ENCODE measurements at regions of chr3 and their contacts with region 1.

Region 1: DNA sequence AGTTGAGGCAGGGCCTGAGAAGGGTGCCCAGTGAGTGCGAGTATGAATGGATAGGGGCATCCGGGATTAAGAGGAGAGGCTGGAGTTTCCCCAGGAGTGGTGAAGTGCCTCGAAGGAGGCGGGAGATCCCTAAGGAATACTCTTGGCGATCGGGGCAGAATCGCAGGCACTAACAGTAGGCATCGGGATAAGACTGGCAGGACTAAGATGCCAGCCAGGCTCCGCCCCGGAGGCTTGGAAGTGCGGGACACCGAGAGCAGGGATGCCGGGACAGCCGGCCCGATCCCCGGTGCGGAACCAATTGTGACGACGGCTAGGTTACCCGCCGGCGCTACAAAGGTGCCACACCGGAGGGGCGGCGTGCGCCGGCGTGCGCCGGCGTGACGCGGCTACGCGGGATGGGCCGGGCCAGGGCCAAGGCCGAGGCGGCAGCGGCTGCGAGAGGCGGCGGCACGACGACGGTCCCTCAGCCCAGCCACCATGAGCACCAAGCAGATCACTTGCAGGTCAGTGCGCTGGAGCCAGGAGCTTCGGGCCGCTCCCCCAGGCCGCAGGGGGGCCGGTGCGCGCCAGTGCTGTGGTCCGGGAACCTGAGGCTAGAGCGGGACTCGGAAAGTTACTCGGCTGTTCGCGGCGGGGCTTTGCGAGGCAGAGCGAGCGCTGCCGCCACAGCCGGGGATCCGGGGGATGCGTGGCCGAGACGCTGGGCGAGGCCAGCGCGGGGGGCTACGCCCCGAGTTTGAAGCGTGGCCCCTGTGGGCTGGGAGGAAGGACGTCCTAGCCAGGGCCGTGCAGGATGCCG is at the start of gene MKRN2:
- DNase-seq: peak; percentile 89
- H3K4me3 ChIP-seq: peak within 1 kb of the TSS; percentile 86 to 98 (median 89)
- H3K27ac ChIP-seq: peak within 1 kb of the TSS; percentile 56
- H3K4me1 ChIP-seq: peaks cover 21% of the 10 kb centered on the region
- H3K27me3 ChIP-seq: no peaks in the 10 kb centered on the region
- CTCF ChIP-seq: no peak
- POLR2A ChIP-seq: peak; percentile 98
- total RNA-seq, gene MKRN2: 26.4 and 27.3 TPM in 2 replicates

Region 2: DNA sequence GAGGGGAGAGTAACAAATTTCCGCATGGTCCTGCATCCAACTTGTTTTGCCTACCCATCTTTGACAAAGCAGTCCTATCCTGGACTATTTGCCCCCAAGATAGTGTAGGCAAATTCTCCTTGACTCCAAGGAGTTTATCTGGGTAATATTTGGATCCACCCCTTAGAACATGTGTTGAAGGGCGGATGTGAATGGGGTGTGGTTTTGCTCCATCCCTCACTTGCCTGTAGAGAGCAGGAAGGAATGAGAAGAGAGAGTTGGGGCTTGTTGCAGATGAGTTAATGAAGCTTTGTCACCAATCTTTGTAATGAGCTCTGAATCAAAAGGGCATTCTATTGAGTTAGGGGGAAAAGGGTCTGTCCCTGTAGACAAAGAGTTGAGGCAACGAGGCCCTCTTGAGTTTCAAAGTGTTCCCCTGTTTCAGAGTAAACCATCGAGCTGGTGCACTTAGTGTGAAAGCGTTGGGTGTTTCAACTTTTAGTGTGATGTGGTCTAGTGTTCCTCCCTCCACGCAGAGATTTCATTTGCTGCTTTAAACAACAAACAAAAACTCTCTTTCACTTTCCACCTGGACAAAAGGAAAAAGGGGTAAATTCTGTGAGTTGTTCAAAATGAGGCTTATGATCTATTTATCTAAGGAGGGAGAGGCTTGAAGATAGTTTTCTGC is 310.2 kb before region 1 on chr3:
- CTCF ChIA-PET with region 1: no interaction called
- POLR2A ChIA-PET with region 1: no interaction called
- dilution Hi-C with region 1: no loop called
- intact Hi-C with region 1: no loop called
- DNase-seq: no peak
- H3K4me3 ChIP-seq: no peak overlapping the region
- H3K27ac ChIP-seq: no peak overlapping the region
- H3K4me1 ChIP-seq: no peaks in the 10 kb centered on the region
- H3K27me3 ChIP-seq: peaks cover 7 to 15% of the 10 kb centered on the region in 2 experiments
- CTCF ChIP-seq: no peak
- POLR2A ChIP-seq: no peak

Region 3: GRCh38 chr3:12508291-12508700 is 48.6 kb before region 1 on chr3:
- CTCF ChIA-PET with region 1: no interaction called
- POLR2A ChIA-PET with region 1: no interaction called
- dilution Hi-C with region 1: no loop called
- intact Hi-C with region 1: loop called (anchors 1 kb)
- DNase-seq: peak; percentile 76
- H3K4me3 ChIP-seq: no peak overlapping the region
- H3K27ac ChIP-seq: peak overlapping the region; percentile 49
- H3K4me1 ChIP-seq: peaks cover 18% of the 10 kb centered on the region
- H3K27me3 ChIP-seq: no peaks in the 10 kb centered on the region
- CTCF ChIP-seq: no peak
- POLR2A ChIP-seq: no peak

Region 4: DNA sequence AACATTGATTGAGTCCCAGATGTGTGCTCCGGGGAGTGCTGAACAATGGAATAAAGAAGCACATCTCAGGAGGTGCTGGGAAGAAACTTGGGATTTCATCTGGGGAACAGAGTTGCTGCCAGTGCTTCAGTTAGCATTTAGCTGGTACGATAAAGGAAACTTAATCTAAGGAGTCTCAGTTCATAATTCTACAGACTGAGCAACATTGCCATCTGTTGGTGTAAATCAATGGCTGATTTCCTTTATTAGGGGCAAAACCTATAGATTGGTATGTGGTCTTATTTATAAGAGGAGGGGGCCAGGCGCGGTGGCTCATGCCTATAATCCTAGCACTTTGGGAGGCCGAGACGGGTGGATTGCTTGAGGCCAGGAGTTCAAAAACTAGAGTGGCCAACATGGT is 20.4 kb before region 1 on chr3:
- CTCF ChIA-PET with region 1: no interaction called
- POLR2A ChIA-PET with region 1: no interaction called
- dilution Hi-C with region 1: no loop called
- intact Hi-C with region 1: no loop called
- DNase-seq: no peak
- H3K4me3 ChIP-seq: no peak overlapping the region
- H3K27ac ChIP-seq: no peak overlapping the region
- H3K4me1 ChIP-seq: no peaks in the 10 kb centered on the region
- H3K27me3 ChIP-seq: no peaks in the 10 kb centered on the region
- CTCF ChIP-seq: no peak
- POLR2A ChIP-seq: no peak

Region 5: GRCh38 chr3:12566976-12567375 is 10.1 kb after region 1 on chr3:
- CTCF ChIA-PET with region 1: interaction called, 7 read pairs
- POLR2A ChIA-PET with region 1: no interaction called
- dilution Hi-C with region 1: no loop called
- intact Hi-C with region 1: loop called (anchors 1 kb)
- DNase-seq: peak; percentile 20
- H3K4me3 ChIP-seq: no peak overlapping the region
- H3K27ac ChIP-seq: no peak overlapping the region
- H3K4me1 ChIP-seq: peaks cover 4% of the 10 kb centered on the region
- H3K27me3 ChIP-seq: no peaks in the 10 kb centered on the region
- CTCF ChIP-seq: no peak
- POLR2A ChIP-seq: no peak

Region 6: GRCh38 chr3:12841149-12841970 is 284.5 kb after region 1 on chr3 and contains the start of gene RPL32:
- CTCF ChIA-PET with region 1: no interaction called
- POLR2A ChIA-PET with region 1: no interaction called
- dilution Hi-C with region 1: no loop called
- intact Hi-C with region 1: loop called (anchors 5 kb)
- DNase-seq: peak; percentile 97
- H3K4me3 ChIP-seq: peak within 1 kb of the TSS; percentile 88 to 98 (median 91)
- H3K27ac ChIP-seq: peak within 1 kb of the TSS; percentile 95
- H3K4me1 ChIP-seq: peaks cover 26% of the 10 kb centered on the region
- H3K27me3 ChIP-seq: no peaks in the 10 kb centered on the region
- CTCF ChIP-seq: peak; percentile 74 to 87
- POLR2A ChIP-seq: peak; percentile 98
- total RNA-seq, gene RPL32: 1,569 and 1,588 TPM in 2 replicates